MCF 10A (cell line): ENCODE measurements at regions of chrX and their contacts with region 1.

Region 1: DNA sequence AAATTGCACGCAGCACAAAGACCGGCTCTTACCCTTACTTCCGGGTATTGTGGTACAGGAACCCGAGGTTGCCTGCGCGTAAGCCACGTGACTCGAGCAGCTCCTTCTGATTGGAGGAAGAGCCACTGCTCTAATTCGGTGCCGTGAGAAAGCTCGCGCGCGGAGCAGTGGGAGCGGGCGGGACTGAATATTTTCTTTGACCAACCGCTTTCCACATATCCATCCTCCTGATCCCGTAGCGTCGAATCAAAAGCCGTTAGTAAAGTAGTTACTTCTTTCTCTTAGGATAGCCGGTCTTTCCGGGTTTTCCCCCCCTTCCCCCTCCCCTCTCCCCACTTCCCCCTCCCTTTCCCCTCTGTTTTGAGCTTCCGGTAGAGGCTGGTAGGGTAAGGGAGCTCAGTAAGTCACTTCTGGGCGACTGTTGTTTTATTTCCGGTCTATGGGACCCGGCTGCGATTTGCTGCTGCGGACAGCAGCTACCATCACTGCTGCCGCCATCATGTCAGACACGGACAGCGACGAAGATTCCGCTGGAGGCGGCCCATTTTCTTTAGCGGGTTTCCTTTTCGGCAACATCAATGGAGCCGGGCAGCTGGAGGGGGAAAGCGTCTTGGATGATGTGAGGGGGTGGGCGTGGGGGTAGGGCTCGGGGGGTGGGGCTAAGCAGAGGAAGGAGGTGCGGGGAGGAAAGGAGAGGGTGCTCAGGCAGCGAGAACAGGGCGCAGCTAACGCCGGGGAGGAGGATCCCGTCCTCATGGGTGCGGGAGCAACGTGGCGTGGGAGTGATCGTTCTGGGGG is at the start of gene TAF1:
- DNase-seq: peak; percentile 95
- H3K4me3 Mint-ChIP-seq: peak within 1 kb of the TSS; percentile 96
- H3K27ac Mint-ChIP-seq: peak within 1 kb of the TSS; percentile 97
- H3K4me1 Mint-ChIP-seq: peaks cover 5% of the 10 kb centered on the region
- H3K27me3 Mint-ChIP-seq: peaks cover 4% of the 10 kb centered on the region
- CTCF ChIP-seq: no peak
- total RNA-seq, gene TAF1: 31.9 and 34.9 TPM in 2 replicates

Region 2: DNA sequence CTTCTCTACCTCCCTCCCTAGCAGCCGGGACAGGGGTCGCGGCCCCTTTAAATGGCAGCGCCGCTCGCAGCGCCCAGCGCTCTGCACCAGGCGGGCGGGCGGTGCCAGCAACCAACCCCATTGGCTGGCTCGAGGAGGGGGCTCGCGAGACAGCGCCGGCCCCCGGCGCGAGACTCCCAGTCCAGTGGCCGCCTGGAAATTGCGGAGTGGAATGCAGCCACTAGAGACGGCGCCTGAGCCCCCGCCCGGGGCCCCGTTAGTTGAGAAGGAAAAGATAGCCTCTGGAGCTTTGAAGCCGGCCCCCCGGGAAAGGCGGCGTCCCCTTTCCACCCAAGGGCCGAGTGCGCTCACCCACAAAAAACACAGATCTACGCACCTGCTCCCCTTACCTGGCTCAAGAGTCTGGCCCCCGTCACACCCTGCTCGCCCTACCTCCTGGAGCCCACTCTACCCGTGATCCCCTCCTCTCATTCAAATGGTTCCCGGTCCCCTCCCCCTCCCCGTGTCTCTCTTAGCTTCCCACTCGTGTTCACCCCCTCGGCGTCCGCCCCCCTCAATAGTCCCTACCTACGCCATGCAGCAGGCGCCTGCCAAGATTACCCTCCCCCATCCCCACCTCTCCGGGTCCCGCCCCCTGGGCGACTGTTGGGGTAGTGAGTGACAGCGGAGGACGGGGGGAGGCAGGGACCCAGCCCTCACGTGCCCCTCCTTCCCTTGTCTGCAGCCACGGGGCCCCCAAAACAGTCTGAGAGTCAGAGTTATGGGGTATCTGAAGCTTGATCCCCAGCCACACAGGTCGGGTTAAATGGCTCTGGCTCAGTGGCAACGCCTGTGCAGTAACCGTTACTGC is 111.8 kb before region 1 on chrX and contains the start of gene ZMYM3:
- CTCF ChIA-PET with region 1: no interaction called
- POLR2A ChIA-PET with region 1: interaction called, 23 read pairs
- intact Hi-C with region 1: loop called (anchors 5 kb)
- DNase-seq: peak; percentile 83
- H3K4me3 Mint-ChIP-seq: peak within 1 kb of the TSS; percentile 92
- H3K27ac Mint-ChIP-seq: peak within 1 kb of the TSS; percentile 82
- H3K4me1 Mint-ChIP-seq: peaks cover 8% of the 10 kb centered on the region
- H3K27me3 Mint-ChIP-seq: peaks cover 10% of the 10 kb centered on the region
- CTCF ChIP-seq: no peak
- total RNA-seq, gene ZMYM3: 7.9 and 8.4 TPM in 2 replicates